Heart left ventricle (tissue), 16 donors: ENCODE measurements at regions of chr1 and their contacts with region 1.

Region 1: GRCh38 chr1:153990468-153991150 is at the start of gene RPS27:
- DNase-seq: peak; percentile 84 to 95 (median 94)
- ATAC-seq: peak; percentile 76 to 90 (median 88)
- H3K4me3 ChIP-seq: peak within 1 kb of the TSS; percentile 48 to 93 (median 77)
- H3K27ac ChIP-seq: peak within 1 kb of the TSS; percentile 87 to 98 (median 94)
- H3K4me1 ChIP-seq: peaks cover 5 to 49% (median 31%) of the 10 kb centered on the region in 12 donors
- H3K27me3 ChIP-seq: no peaks in the 10 kb centered on the region
- CTCF ChIP-seq: peak in 1 of 12 donors; percentile 16
- POLR2A ChIP-seq: peak; percentile 66 to 94
- total RNA-seq, gene RPS27: 537 to 1,013 (median 772) TPM

Region 2: DNA sequence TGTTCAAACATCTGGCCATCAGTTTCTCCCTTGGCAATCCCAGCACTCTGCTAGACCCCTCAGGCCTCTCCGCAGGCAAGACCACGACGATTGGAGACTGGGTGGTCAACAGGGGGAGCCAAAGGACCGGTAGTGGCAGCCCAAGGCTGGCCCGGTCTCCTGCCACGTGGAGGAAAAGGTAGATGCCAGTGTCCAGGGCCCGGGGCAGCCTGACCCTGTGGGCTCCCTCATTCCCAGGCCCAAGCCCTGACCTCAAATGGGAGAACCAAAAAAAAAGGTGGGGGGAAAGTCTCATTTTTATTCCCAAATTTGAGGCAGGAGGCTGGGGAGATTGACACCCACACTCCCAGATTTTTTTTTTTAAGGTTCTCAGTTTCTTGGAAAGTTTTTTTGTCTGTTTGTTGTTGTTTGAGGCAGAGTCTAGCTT is 479.6 kb before region 1 on chr1:
- intact Hi-C with region 1: loop called in 4 of 10 experiments (anchors 5 to 10 kb)
- DNase-seq: peak; percentile 82 to 88 (median 84)
- ATAC-seq: peak; percentile 60 to 62 (median 60)
- H3K4me3 ChIP-seq: no peak overlapping the region
- H3K27ac ChIP-seq: no peak overlapping the region
- H3K4me1 ChIP-seq: peaks cover 0 to 32% (median 21%) of the 10 kb centered on the region in 12 donors
- H3K27me3 ChIP-seq: no peaks in the 10 kb centered on the region
- CTCF ChIP-seq: peak; percentile 81 to 97 (median 90)
- POLR2A ChIP-seq: no peak

Region 3: DNA sequence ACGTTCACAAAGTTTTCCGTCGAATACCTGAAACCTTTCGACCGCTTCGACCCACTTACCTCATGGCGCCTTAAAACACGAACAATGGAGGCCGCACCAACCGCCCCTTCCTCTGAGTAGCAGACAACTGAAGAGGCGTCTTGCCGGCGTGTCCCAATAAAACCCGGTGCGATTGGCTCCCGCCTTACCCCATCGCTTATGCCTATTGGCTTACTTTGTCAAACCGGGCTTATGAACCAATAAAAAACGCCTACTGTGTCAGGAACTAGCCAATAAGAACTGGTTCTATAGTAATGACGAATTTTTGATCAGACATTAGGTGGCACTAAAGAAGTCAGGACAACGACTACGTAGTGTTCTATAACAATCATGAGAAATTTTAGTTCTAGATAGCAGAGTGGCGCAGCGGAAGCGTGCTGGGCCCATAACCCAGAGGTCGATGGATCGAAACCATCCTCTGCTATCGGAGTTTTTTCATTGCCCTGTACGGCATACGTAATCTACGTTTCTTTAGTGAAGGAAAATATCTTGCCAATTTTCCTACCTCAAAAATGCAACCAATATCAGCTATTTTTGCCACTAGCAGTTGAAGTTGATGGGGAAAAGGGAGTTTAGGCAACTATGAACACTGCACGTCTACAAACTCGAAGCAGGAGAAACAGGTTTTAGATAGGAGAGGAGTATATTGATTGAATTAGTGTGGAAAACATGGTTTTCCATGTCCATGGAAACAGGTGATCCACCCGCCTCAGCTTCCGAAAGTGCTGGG is 319.6 kb before region 1 on chr1 and contains the start of gene ILF2:
- intact Hi-C with region 1: loop called in 8 of 10 experiments (anchors 2 to 10 kb)
- DNase-seq: peak; percentile 97 to 98 (median 98)
- ATAC-seq: peak; percentile 95 to 98 (median 97)
- H3K4me3 ChIP-seq: peak within 1 kb of the TSS; percentile 49 to 93 (median 82)
- H3K27ac ChIP-seq: peak within 1 kb of the TSS; percentile 6 to 90 (median 80)
- H3K4me1 ChIP-seq: peaks cover 6 to 26% (median 14%) of the 10 kb centered on the region in 12 donors
- H3K27me3 ChIP-seq: no peaks in the 10 kb centered on the region
- CTCF ChIP-seq: peak in 6 of 12 donors; percentile 11 to 53 (median 39)
- POLR2A ChIP-seq: peak; percentile 81 to 91
- total RNA-seq, gene ILF2: 65.0 to 92.3 (median 74.2) TPM

Region 4: GRCh38 chr1:153790966-153791647 is 199.5 kb before region 1 on chr1:
- intact Hi-C with region 1: loop called in 6 of 10 experiments (anchors 2 to 5 kb)
- DNase-seq: no peak
- ATAC-seq: peak in 3 of 4 donors; percentile 13 to 25 (median 18)
- H3K4me3 ChIP-seq: peak overlapping the region in 10 of 12 donors; percentile 26 to 51 (median 42)
- H3K27ac ChIP-seq: peak overlapping the region; percentile 73 to 96 (median 89)
- H3K4me1 ChIP-seq: peaks cover 0 to 35% (median 18%) of the 10 kb centered on the region in 12 donors
- H3K27me3 ChIP-seq: no peaks in the 10 kb centered on the region
- CTCF ChIP-seq: no peak
- POLR2A ChIP-seq: no peak

Region 5: GRCh38 chr1:153946622-153947241 is 43.9 kb before region 1 on chr1 and contains the start of gene DENND4B:
- intact Hi-C with region 1: loop called in 1 of 10 experiments (anchors 5 kb)
- DNase-seq: peak; percentile 85 to 94 (median 87)
- ATAC-seq: peak; percentile 53 to 81 (median 77)
- H3K4me3 ChIP-seq: peak within 1 kb of the TSS; percentile 67 to 100 (median 92)
- H3K27ac ChIP-seq: peak within 1 kb of the TSS; percentile 97 to 100 (median 100)
- H3K4me1 ChIP-seq: peaks cover 0 to 43% (median 29%) of the 10 kb centered on the region in 12 donors
- H3K27me3 ChIP-seq: no peaks in the 10 kb centered on the region
- CTCF ChIP-seq: peak; percentile 82 to 99 (median 95)
- POLR2A ChIP-seq: no peak
- total RNA-seq, gene DENND4B: 30.5 to 60.7 (median 40.8) TPM

Region 6: DNA sequence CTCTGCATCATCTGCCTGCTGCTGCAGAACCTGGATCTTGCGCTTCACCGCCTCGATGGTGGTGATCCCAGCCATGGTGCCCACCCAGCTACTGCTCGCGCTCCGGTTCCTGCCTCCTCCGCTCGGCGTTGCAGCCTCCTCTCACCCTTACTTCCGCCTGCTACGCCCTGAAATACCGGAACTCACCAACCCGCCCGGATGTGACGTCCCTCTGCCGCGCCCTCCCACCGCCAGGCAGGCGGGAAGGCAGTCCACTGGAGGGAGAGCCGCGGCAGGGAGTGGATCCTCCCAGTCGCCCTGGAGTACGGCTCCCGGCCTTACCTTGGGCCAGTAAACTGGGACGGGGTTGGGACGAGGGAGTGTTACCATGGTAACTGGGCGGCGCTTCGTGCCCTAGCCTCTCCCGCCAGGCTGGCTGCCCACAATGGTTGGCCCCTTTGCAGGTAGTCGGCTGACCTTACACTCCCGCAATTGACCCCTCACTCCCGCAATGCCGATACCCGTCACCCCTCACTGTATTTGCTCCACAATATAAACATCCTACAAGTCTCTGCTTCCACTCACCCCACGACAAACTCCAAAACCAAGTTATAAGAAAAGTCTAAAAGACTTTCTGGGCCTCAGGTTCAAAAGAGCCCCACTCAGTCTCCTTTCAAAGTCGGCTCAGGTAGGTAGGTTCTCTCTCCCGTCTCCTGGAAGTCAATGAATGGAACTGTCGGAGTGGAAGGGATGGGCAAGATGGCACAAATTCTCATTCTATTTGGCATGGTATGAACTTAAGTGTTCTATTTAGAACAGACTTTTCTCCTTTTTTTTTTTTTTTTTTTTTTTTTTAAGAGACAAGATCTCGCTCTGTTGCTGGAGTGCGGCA is 192.7 kb after region 1 on chr1:
- intact Hi-C with region 1: loop called in 3 of 10 experiments (anchors 5 to 10 kb)
- DNase-seq: peak; percentile 95 to 97 (median 96)
- ATAC-seq: peak; percentile 95 to 98 (median 97)
- H3K4me3 ChIP-seq: peak overlapping the region; percentile 84 to 100 (median 96)
- H3K27ac ChIP-seq: peak overlapping the region; percentile 19 to 98 (median 94)
- H3K4me1 ChIP-seq: peaks cover 8 to 47% (median 42%) of the 10 kb centered on the region in 12 donors
- H3K27me3 ChIP-seq: no peaks in the 10 kb centered on the region
- CTCF ChIP-seq: peak in 3 of 12 donors; percentile 16 to 24 (median 18)
- POLR2A ChIP-seq: peak; percentile 18 to 97

Region 7: GRCh38 chr1:154272217-154272998 is 281.8 kb after region 1 on chr1 and contains the start of gene HAX1:
- intact Hi-C with region 1: loop called in 2 of 10 experiments (anchors 5 to 10 kb)
- DNase-seq: peak; percentile 91 to 95 (median 94)
- ATAC-seq: peak; percentile 90 to 95 (median 93)
- H3K4me3 ChIP-seq: peak within 1 kb of the TSS; percentile 45 to 99 (median 82)
- H3K27ac ChIP-seq: peak within 1 kb of the TSS; percentile 69 to 97 (median 88)
- H3K4me1 ChIP-seq: peaks cover 0 to 22% (median 12%) of the 10 kb centered on the region in 12 donors
- H3K27me3 ChIP-seq: no peaks in the 10 kb centered on the region
- CTCF ChIP-seq: peak; percentile 61 to 96 (median 80)
- POLR2A ChIP-seq: peak in 1 of 2 donors; percentile 63
- total RNA-seq, gene HAX1: 127 to 230 (median 165) TPM